MCF 10A (cell line): ENCODE measurements at regions of chr3 and their contacts with region 1.

Region 1: GRCh38 chr3:128665362-128666038 is 14.9 kb upstream of the RPN1 start:
- DNase-seq: no peak
- H3K4me3 Mint-ChIP-seq: no peak overlapping the region
- H3K27ac Mint-ChIP-seq: no peak overlapping the region
- H3K4me1 Mint-ChIP-seq: no peaks in the 10 kb centered on the region
- H3K27me3 Mint-ChIP-seq: peaks cover 23% of the 10 kb centered on the region
- CTCF ChIP-seq: no peak

Region 2: DNA sequence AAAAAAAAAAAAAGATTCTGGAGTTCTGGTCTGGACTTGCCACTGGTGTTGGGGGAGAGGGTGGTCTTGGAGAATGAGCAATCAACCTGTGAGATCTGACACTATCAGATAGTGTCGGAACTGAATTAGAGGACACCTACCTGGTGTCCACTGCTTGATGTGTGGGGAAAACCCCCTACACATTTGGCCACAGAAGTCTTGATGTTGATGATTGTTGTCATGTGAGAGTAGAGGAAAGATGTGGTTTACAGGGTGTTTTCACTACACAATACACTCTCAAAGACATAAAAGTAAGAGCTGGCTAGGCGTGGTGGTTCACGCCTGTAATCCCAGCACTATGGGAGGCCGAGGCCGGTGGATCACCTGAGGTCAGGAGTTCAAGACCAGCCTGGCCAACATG is 23.6 kb after region 1 on chr3:
- CTCF ChIA-PET with region 1: interaction called, 3 read pairs
- POLR2A ChIA-PET with region 1: interaction called, 5 read pairs
- intact Hi-C with region 1: loop called (anchors 2 kb)
- DNase-seq: no peak
- H3K4me3 Mint-ChIP-seq: no peak overlapping the region
- H3K27ac Mint-ChIP-seq: no peak overlapping the region
- H3K4me1 Mint-ChIP-seq: no peaks in the 10 kb centered on the region
- H3K27me3 Mint-ChIP-seq: no peaks in the 10 kb centered on the region
- CTCF ChIP-seq: no peak